HEK293T (cell line): ENCODE measurements at regions of chr6 and their contacts with region 1.

Region 1: GRCh38 chr6:132813173-132813856 is 1.1 kb upstream of the RPS12 start:
- DNase-seq: no peak

Region 2: DNA sequence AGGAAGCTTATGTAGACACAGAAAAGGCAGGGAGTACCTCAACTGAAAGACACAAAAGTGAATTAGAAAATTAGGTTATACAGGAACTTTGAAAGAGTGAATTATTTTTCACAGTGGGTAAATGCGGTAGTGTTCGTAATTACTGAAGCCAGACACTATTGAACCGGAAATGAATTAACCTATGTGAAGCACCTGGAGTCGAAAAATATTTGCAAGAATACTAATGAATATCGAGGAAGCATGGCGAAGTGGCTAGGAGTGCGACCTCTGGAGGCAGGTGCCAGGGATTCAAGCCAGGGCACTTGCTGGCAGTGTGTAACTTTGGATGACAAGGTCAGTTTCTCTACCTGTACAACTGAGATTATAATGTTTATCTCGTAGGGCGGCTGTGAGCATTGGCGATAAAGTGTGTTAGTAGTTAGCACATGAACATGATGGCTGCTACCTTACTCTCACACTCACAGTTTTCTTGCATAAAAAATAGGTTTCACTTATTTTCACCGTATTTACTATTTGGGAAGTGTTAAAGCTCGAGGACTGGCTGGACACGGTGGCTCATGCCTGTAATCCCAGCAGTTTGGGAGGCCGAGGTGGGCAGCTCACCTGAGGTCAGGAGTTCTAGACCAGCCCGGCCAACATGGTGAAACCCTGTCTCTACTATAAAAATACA is 14.3 kb before region 1 on chr6:
- CTCF ChIA-PET with region 1: interaction called, 14 read pairs
- POLR2A ChIA-PET with region 1: interaction called, 17 read pairs
- DNase-seq: peak; percentile 80

Region 3: DNA sequence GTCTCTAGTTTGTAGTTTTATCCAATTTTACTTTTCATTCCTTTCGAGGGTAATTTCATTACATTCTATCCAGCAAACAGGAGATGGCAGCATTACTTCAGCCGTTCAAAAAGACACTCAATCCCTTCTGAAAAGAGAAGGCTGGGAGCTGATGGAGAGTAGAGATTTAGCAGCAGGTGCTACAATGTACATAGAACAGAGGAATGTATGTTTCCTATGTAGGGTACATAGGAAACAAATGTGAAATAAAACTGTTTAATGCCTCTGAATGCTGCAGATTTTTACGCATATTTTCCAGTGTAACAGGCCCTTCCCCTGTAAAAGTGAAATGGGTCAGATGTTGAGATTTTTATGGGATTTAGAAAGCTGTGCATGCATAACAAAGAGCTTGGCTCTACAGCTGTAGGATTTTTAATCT is 17.0 kb after region 1 on chr6:
- CTCF ChIA-PET with region 1: interaction called, 4 read pairs
- POLR2A ChIA-PET with region 1: interaction called, 18 read pairs
- DNase-seq: peak; percentile 38

Region 4: DNA sequence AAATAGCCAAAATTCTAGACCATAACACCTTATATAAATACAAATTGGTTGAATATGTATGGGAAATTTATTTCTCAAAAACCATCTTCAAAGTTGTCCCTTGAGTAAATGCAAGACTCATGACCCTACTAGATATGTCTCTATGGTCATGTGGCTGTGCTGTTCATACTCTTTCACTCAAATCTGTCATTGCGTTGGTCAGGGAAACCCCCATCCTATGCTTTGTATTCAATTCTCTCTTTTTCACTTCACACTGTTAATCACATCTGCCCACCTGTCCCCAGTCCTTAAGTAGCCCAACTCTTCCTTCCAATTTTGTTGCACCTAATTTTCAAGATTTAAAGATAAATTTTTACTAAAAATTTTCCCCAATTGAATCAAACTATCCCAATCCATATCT is 52.0 kb after region 1 on chr6:
- CTCF ChIA-PET with region 1: no interaction called
- POLR2A ChIA-PET with region 1: no interaction called
- DNase-seq: no peak